Endothelial cell of umbilical vein (primary cell): ENCODE measurements at regions of chr6 and their contacts with region 1.

Region 1: GRCh38 chr6:15922510-15923250 is 206.2 kb upstream of the MYLIP start:
- DNase-seq: peak; percentile 99
- H3K4me3 ChIP-seq: no peak overlapping the region
- H3K27ac ChIP-seq: peak overlapping the region; percentile 86
- H3K4me1 ChIP-seq: peaks cover 23% of the 10 kb centered on the region
- H3K27me3 ChIP-seq: no peaks in the 10 kb centered on the region
- CTCF ChIP-seq: no peak
- POLR2A ChIP-seq: peak; percentile 76

Region 2: GRCh38 chr6:15870333-15871043 is 52.2 kb before region 1 on chr6:
- CTCF ChIA-PET with region 1: no interaction called
- POLR2A ChIA-PET with region 1: no interaction called
- dilution Hi-C with region 1: no loop called
- intact Hi-C with region 1: loop called (anchors 2 kb)
- DNase-seq: peak; percentile 91
- H3K4me3 ChIP-seq: no peak overlapping the region
- H3K27ac ChIP-seq: peak overlapping the region; percentile 36
- H3K4me1 ChIP-seq: peaks cover 29% of the 10 kb centered on the region
- H3K27me3 ChIP-seq: no peaks in the 10 kb centered on the region
- CTCF ChIP-seq: no peak
- POLR2A ChIP-seq: no peak

Region 3: GRCh38 chr6:15893556-15894268 is 29.0 kb before region 1 on chr6:
- CTCF ChIA-PET with region 1: interaction called, 5 read pairs
- POLR2A ChIA-PET with region 1: no interaction called
- dilution Hi-C with region 1: no loop called
- intact Hi-C with region 1: loop called (anchors 1 kb)
- DNase-seq: peak; percentile 50
- H3K4me3 ChIP-seq: no peak overlapping the region
- H3K27ac ChIP-seq: no peak overlapping the region
- H3K4me1 ChIP-seq: peaks cover 18% of the 10 kb centered on the region
- H3K27me3 ChIP-seq: no peaks in the 10 kb centered on the region
- CTCF ChIP-seq: peak; percentile 34 to 42
- POLR2A ChIP-seq: no peak

Region 4: GRCh38 chr6:15953180-15953880 is 30.6 kb after region 1 on chr6:
- CTCF ChIA-PET with region 1: no interaction called
- POLR2A ChIA-PET with region 1: no interaction called
- dilution Hi-C with region 1: no loop called
- intact Hi-C with region 1: loop called (anchors 1 kb)
- DNase-seq: peak; percentile 67
- H3K4me3 ChIP-seq: no peak overlapping the region
- H3K27ac ChIP-seq: peak overlapping the region; percentile 39
- H3K4me1 ChIP-seq: peaks cover 32% of the 10 kb centered on the region
- H3K27me3 ChIP-seq: no peaks in the 10 kb centered on the region
- CTCF ChIP-seq: no peak
- POLR2A ChIP-seq: no peak

Region 5: DNA sequence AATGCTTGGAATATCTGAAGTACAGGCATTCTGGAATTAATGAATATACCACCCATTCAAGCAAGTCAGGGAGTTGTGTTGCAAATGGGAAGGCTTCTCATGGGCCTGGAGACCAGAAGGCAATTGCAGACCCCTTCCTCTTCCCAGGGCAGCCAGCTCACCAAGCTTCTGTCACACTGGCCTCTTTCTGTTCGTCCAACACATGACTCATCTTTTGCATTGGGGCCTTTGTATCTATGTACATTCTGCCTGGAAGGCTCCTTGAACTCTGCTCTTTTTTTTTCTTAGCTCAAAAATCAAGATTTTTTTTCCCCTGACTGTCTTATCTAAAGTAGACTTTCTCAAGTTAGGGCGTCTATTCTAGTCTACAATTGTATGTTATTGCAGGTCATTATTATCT is 73.3 kb after region 1 on chr6:
- CTCF ChIA-PET with region 1: no interaction called
- POLR2A ChIA-PET with region 1: no interaction called
- dilution Hi-C with region 1: no loop called
- intact Hi-C with region 1: loop called (anchors 1 kb)
- DNase-seq: peak; percentile 48
- H3K4me3 ChIP-seq: no peak overlapping the region
- H3K27ac ChIP-seq: no peak overlapping the region
- H3K4me1 ChIP-seq: peaks cover 33% of the 10 kb centered on the region
- H3K27me3 ChIP-seq: no peaks in the 10 kb centered on the region
- CTCF ChIP-seq: no peak
- POLR2A ChIP-seq: no peak